Stomach (tissue), 19 donors: ENCODE measurements at regions of chr1 and their contacts with region 1.

Region 1: DNA sequence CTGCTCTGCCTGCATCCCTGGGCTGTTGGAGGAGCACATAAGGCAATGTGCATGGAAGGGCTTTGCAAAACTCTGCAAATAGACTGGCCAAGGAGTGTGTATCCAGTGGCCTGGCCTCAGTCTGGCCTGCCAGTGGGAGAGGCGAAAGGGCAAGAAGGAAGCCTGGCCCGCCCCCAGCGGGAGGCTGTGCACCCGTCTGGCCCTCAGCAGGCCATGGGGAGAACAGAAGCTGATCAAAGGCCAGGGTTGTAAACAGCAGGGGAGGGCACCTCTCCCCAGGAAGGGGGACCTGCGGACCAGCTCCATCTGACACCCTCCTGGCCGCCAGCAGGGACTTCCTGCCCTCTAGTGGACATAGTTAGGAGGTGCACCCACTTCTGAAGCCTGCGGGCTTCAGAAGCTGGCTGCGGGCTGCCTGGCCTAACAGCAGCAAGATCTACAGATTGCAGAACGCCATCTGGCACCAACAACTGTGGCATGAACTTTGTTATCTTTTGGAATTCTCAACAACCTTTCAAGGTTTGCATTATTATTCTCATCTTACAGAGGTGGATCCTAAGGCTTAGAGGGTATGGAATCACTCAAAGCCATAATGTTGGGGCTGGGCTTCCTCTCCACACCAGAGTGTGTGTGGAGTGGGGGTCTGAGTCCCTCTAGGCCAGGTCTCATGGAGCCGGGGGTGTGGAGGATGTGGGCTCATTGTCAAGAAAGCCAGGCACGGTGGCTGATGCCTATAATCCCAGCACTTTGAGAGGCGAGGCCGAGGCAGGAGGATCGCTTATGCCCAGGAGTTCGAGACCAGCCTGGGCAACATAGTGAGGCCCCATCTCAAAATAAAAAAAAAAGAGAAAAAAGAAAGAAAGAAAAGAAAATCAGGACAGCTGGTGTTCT is 18.9 kb upstream of the CDK18 start:
- DNase-seq: peak; percentile 80 to 91
- H3K4me3 ChIP-seq: no peak overlapping the region
- H3K27ac ChIP-seq: no peak overlapping the region
- H3K4me1 ChIP-seq: peaks cover 0 to 9% (median 8%) of the 10 kb centered on the region in 4 donors
- H3K27me3 ChIP-seq: peaks cover 0 to 63% (median 12%) of the 10 kb centered on the region in 3 donors
- CTCF ChIP-seq: peak in 6 of 7 experiments; percentile 85 to 99 (median 92)
- EP300 ChIP-seq: no peak
- POLR2A ChIP-seq: no peak

Region 2: GRCh38 chr1:205204552-205204951 is 281.0 kb before region 1 on chr1:
- intact Hi-C with region 1: no loop called
- DNase-seq: no peak
- H3K4me3 ChIP-seq: no peak overlapping the region
- H3K27ac ChIP-seq: no peak overlapping the region
- H3K4me1 ChIP-seq: peaks cover 0 to 39% (median 22%) of the 10 kb centered on the region in 4 donors
- H3K27me3 ChIP-seq: no peaks in the 10 kb centered on the region
- CTCF ChIP-seq: no peak
- EP300 ChIP-seq: no peak
- POLR2A ChIP-seq: no peak

Region 3: GRCh38 chr1:205300886-205301821 is 184.4 kb before region 1 on chr1:
- intact Hi-C with region 1: no loop called
- DNase-seq: peak; percentile 87 to 89
- H3K4me3 ChIP-seq: no peak overlapping the region
- H3K27ac ChIP-seq: peak overlapping the region; percentile 2 to 48 (median 14)
- H3K4me1 ChIP-seq: peaks cover 11 to 19% (median 13%) of the 10 kb centered on the region in 4 donors
- H3K27me3 ChIP-seq: no peaks in the 10 kb centered on the region
- CTCF ChIP-seq: no peak
- EP300 ChIP-seq: no peak
- POLR2A ChIP-seq: no peak

Region 4: DNA sequence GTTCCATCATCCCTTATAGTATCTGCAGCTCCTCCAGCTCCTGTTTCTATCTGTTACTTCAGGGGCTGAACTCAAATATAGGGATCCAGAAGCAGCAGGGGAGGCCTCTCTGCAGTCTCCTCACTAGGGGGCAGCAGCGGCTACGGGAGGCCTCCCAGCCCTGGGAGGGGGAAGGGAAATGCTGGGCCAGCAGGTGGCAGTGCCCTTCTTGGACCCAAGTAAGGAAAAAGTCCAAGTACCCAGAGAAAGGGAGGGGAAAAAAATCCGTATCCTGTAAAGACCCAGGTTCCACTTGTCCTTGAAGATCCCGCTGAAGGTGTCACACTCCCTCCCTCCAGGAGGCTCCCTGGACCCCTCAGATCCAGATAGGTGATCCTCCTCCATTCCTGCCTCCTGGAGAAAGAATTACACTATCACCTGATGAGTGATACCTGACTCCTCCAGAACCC is 149.9 kb before region 1 on chr1:
- intact Hi-C with region 1: loop called (anchors 10 kb)
- DNase-seq: peak; percentile 88 to 94
- H3K4me3 ChIP-seq: no peak overlapping the region
- H3K27ac ChIP-seq: no peak overlapping the region
- H3K4me1 ChIP-seq: peaks cover 0 to 3% (median 0%) of the 10 kb centered on the region in 4 donors
- H3K27me3 ChIP-seq: peaks cover 0 to 14% (median 0%) of the 10 kb centered on the region in 3 donors
- CTCF ChIP-seq: peak in 5 of 7 experiments; percentile 80 to 97 (median 92)
- EP300 ChIP-seq: no peak
- POLR2A ChIP-seq: no peak

Region 5: DNA sequence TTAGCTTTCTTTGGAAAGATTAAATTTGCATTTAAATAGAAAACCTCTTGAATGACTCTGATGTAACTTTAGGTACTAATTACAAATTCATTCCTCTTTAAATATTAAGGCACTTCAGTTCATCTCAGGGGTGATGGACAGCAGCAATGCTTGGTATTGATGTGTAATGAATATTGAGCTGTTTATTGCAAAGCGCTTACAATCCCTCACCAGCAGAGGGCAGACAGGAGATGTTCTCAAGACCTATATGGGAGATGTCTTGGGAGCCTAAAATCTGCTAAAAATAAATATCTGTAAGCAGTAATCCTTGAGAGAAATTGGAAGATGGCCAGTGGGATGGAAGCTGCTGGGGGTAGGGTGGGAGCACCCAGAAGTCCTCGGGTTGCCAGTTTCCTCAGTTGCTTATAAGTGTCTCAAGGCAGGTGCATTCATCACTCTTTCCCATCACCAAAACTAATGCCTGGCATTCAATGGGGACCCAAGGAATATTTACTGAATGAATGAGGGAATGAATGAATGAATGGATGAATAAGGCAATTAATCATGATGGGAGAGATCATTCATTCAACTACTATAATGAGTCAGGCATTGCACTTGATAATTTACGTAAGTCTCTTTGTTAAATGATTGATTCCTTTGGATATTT is 131.2 kb before region 1 on chr1:
- intact Hi-C with region 1: loop called (anchors 5 kb)
- DNase-seq: peak; percentile 74 to 87
- H3K4me3 ChIP-seq: no peak overlapping the region
- H3K27ac ChIP-seq: peak overlapping the region in 4 of 5 donors; percentile 3 to 58 (median 44)
- H3K4me1 ChIP-seq: peaks cover 0 to 22% (median 17%) of the 10 kb centered on the region in 4 donors
- H3K27me3 ChIP-seq: peaks cover 0 to 18% (median 0%) of the 10 kb centered on the region in 3 donors
- CTCF ChIP-seq: peak in 5 of 7 experiments; percentile 51 to 84 (median 82)
- EP300 ChIP-seq: no peak
- POLR2A ChIP-seq: no peak

Region 6: DNA sequence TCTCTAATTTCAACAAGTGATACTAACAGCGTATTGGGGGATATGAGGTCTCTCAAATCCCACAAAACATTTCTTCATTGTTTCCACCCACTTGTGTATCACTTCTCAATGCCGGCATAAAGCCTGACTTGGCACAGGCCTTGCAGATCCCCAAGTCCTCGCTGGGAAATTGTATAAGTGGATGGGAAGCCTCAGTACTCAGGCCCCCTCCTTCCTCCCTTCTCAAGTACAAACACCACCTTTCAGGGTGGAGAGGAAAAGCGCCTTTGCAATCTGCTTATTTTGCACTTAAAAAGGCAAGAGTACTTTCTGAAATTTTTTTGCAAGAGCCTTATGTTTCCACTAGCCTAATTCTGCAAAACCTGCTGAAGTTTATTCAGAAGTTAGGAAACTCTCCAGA is 103.0 kb before region 1 on chr1:
- intact Hi-C with region 1: no loop called
- DNase-seq: no peak
- H3K4me3 ChIP-seq: no peak overlapping the region
- H3K27ac ChIP-seq: no peak overlapping the region
- H3K4me1 ChIP-seq: no peaks in the 10 kb centered on the region
- H3K27me3 ChIP-seq: peaks cover 0 to 23% (median 0%) of the 10 kb centered on the region in 3 donors
- CTCF ChIP-seq: no peak
- EP300 ChIP-seq: no peak
- POLR2A ChIP-seq: no peak

Region 7: DNA sequence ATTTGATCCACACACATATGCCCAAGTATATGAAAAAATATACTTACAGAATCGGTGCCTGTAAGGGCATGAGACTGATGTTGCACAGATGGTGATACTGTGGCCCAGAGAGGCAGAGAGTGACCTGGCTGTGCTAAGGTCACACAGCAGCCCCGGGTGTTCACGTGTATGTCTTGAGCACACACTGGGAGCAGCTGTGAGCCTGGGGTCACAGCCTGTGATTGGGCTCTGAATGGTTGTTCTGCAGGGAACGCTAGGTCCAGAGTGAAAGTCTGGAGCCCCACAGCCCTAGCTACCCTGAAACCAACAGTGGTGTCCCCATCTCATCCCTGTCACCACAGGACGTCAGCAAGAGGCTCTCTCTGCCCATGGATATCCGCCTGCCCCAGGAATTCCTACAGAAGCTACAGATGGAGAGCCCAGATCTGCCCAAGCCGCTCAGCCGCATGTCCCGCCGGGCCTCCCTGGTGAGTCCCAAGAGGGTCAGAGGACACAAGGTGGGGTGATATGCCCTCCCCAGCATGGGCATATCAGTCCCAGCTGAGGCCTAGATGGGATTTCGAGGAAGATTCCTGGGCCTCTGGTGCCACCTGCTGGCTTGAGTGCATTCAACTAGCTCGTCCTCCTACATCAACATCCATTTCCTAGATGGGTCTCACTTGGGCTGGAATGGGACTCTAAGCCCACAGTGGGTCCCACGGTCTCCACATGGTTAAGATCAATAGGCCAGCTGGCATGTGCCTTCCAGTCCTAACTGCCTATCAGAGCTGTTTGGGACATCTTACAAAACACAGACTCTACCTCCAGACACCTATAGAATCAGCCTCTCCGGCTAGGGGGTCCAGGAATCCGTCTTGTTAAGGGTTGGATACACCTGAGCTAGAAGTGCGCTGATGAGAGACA is 38.6 kb after region 1 on chr1:
- intact Hi-C with region 1: loop called (anchors 5 kb)
- DNase-seq: peak; percentile 80 to 91
- H3K4me3 ChIP-seq: no peak overlapping the region
- H3K27ac ChIP-seq: no peak overlapping the region
- H3K4me1 ChIP-seq: peaks cover 7 to 18% (median 13%) of the 10 kb centered on the region in 4 donors
- H3K27me3 ChIP-seq: peaks cover 0 to 7% (median 0%) of the 10 kb centered on the region in 3 donors
- CTCF ChIP-seq: peak in 5 of 7 experiments; percentile 38 to 87 (median 75)
- EP300 ChIP-seq: no peak
- POLR2A ChIP-seq: no peak